ENCODE measurements at regions of chr4 and their contacts with region 1.

Region 1: DNA sequence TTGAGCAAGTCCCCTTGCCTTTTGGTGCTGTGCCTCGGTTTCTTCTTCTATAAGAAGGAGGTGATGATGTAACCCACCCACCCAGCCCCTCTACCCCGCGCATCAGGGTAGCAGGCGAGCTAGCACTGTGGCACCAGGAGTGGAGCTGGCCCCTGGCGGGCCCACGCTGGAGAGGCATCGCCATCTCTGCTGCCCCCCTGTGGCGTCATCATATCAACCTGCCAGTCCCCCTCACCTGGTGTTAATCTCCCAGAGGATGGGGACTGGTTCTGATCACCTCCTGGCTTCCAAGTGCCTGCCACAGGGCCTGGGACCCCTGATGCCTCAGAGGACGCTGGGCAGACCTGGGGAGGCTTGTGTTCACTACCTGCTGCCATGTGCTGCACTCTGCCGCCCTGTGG is 6.3 kb upstream of the SORCS2 start:
- DNase-seq: peak in 2 of 6 donors; percentile 20 to 67
- ATAC-seq: peak in 3 of 4 donors; percentile 50 to 75 (median 59)
- H3K4me3 ChIP-seq: no peak overlapping the region
- H3K27ac ChIP-seq: no peak overlapping the region
- H3K4me1 ChIP-seq: no peaks in the 10 kb centered on the region
- H3K27me3 ChIP-seq: peaks cover 0 to 3% (median 0%) of the 10 kb centered on the region in 4 donors
- CTCF ChIP-seq: peak in 1 of 4 donors; percentile 27

Region 2: GRCh38 chr4:7295911-7296660 is 110.0 kb after region 1 on chr4:
- intact Hi-C with region 1: loop called in 2 of 3 experiments (anchors 5 kb)
- DNase-seq: peak in 1 of 6 donors; percentile 19
- ATAC-seq: peak in 3 of 4 donors; percentile 52 to 75 (median 72)
- H3K4me3 ChIP-seq: no peak overlapping the region
- H3K27ac ChIP-seq: no peak overlapping the region
- H3K4me1 ChIP-seq: no peaks in the 10 kb centered on the region
- H3K27me3 ChIP-seq: no peaks in the 10 kb centered on the region
- CTCF ChIP-seq: peak in 2 of 4 donors; percentile 6 to 23

Region 3: GRCh38 chr4:7423801-7424552 is 237.9 kb after region 1 on chr4:
- intact Hi-C with region 1: no loop called
- DNase-seq: peak in 2 of 6 donors; percentile 8 to 21
- ATAC-seq: no peak
- H3K4me3 ChIP-seq: no peak overlapping the region
- H3K27ac ChIP-seq: no peak overlapping the region
- H3K4me1 ChIP-seq: no peaks in the 10 kb centered on the region
- H3K27me3 ChIP-seq: no peaks in the 10 kb centered on the region
- CTCF ChIP-seq: no peak

Region 4: GRCh38 chr4:7462509-7462971 is 276.5 kb after region 1 on chr4:
- intact Hi-C with region 1: no loop called
- DNase-seq: peak in 2 of 6 donors; percentile 23 to 32
- ATAC-seq: peak in 3 of 4 donors; percentile 48 to 83 (median 76)
- H3K4me3 ChIP-seq: no peak overlapping the region
- H3K27ac ChIP-seq: no peak overlapping the region
- H3K4me1 ChIP-seq: no peaks in the 10 kb centered on the region
- H3K27me3 ChIP-seq: peaks cover 0 to 4% (median 0%) of the 10 kb centered on the region in 4 donors
- CTCF ChIP-seq: no peak